ENCODE measurements at regions of chr2 and their contacts with region 1.

Region 1: DNA sequence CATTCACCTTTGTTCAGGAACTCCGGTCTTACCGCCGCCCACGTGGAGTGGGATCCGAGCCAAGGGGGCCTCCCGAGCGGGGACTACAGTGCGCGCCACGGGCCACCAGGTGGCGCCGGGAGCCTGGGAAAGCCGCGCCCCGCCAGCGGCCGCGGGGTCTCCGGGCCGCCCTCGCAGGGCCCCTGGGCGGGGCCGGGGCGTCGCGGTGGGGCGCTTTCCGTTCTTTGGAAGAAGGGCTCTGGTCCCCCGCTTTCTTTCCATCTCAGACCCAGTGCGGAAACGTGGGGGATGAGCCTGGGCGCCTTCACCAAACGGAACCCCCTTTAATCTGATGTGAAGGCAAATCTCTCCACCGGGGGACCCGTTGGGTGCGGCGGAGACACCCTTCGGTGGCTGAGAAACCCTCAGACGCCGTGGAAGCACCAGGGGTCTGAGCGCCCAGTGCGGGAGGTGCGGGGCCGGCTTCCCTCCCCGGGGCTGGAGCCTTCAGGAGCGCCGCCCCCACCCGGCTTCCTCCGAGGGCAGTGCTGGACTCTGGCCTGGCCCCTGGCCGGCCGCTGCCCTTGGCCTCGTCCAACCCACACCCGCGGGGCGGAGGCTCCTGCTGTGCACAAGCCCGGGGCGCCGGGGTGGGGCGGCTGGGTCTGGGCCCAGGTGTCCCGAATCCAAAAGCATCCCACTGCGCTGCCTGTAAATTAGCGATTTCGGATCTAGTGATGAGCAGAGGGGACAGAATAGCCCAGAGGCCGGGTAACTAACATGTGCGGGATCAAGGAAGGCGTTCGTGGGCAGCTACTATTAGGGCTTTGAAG is 44.6 kb downstream of the GORASP2 start:
- DNase-seq: peak; percentile 49
- H3K4me3 ChIP-seq: peak overlapping the region; percentile 62
- CTCF ChIP-seq: peak; percentile 71

Region 2: GRCh38 chr2:170917219-170917913 is 56.3 kb before region 1 on chr2:
- in situ Hi-C with region 1: no loop called
- DNase-seq: no peak
- H3K4me3 ChIP-seq: no peak overlapping the region
- CTCF ChIP-seq: no peak

Region 3: DNA sequence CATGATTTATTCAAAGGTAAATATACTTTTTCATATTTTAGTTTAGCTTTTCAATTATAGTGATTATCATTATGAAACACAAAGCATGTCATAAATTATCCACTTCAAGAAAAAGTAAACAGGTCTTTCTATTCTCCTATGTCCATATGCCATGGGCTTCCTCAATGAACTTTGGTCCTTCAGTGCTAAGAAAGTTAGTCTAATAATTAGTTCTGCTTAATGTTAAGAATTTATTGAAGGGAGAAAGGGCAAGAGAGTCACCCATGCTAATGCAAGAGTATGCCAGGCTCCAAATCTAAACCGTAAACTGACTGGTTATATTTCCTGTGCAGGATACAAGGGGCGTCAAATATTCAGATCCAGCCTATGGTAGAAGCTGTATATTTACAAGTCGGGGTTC is 51.5 kb after region 1 on chr2:
- in situ Hi-C with region 1: no loop called
- DNase-seq: no peak
- H3K4me3 ChIP-seq: no peak overlapping the region
- CTCF ChIP-seq: no peak

Region 4: DNA sequence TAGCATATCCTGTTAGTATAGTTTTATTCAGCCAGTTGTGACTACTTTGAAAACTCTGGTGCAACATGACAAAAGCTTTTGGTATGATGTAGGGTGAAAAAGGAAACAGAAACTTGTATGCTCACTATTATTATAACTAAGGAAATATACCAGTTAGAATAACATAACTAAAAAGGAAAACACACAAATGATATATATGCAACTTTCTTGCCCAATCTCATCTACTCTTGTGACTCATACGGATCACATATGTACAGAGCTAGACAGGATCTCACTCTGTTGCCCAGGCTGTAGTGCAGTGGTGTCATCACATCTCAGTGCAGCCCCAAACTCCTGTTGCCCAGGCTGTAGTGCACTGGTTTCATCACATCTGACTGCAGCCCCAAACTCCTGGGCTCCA is 199.4 kb after region 1 on chr2:
- in situ Hi-C with region 1: no loop called
- DNase-seq: no peak
- H3K4me3 ChIP-seq: no peak overlapping the region
- CTCF ChIP-seq: no peak

Region 5: GRCh38 chr2:171416009-171416926 is 442.6 kb after region 1 on chr2:
- in situ Hi-C with region 1: loop called (anchors 25 kb)
- DNase-seq: peak; percentile 92
- H3K4me3 ChIP-seq: no peak overlapping the region
- CTCF ChIP-seq: peak; percentile 92

Region 6: DNA sequence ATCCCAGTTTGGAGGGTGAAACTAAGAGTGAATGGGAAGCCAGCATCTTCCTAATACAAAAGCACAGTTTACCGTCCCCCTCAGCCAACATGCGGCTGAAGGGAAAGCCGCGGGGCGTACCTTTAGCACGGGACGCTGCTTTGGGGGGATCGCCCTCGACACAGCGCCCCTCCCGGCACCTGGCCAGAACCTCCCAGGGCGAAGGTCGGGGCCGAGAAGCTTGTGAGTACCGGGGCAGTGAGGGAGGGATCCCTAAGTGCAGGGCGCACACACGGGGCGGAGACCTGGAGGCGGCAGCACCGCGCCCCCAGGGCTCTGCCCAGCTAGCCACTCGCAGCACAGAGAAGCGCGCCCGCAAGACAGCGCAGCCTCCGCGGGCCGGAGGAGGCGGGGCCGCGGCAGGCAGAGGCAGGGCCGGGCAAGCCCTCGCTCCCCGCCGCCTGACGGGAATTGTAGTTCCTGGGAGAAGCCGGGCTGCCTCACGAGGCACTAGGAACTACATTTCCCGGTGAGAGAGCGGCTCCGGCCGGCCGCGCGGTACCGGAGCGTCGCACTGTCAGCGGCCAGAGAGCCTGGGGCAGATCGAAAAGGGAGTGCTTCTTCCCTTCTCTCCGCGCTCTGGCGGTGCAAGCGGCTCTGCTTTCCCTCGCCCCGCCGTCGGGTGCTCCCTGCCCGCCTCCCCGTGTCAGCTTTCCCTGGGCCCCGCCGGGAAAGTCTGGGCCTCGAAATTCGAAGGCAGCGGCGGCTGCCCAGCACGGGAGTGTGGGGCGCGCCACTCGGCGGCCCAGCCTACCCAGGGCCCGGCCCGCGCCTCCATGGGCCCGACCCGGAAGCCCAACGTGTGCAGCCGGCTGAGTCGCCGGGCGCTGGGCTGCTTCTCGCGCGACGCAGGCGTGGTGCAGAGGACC is 460.3 kb after region 1 on chr2 and contains the starts of genes DCAF17 and METTL8:
- in situ Hi-C with region 1: no loop called
- DNase-seq: peak; percentile 85
- H3K4me3 ChIP-seq: peak within 1 kb of the TSS; percentile 85
- CTCF ChIP-seq: peak; percentile 26

Measured in astrocyte of the cerebellum (primary cell).